ENCODE measurements at regions of chr7 and their contacts with region 1.

Region 1: GRCh38 chr7:119935418-119936025 is 337.5 kb upstream of the KCND2 start:
- DNase-seq: no peak
- H3K4me3 ChIP-seq: no peak overlapping the region
- H3K27ac ChIP-seq: no peak overlapping the region
- H3K4me1 ChIP-seq: no peaks in the 10 kb centered on the region
- H3K27me3 ChIP-seq: no peaks in the 10 kb centered on the region
- CTCF ChIP-seq: peak; percentile 32 to 46

Region 2: GRCh38 chr7:120138497-120138896 is 203.0 kb after region 1 on chr7:
- intact Hi-C with region 1: no loop called
- DNase-seq: no peak
- H3K4me3 ChIP-seq: no peak overlapping the region
- H3K27ac ChIP-seq: no peak overlapping the region
- H3K4me1 ChIP-seq: no peaks in the 10 kb centered on the region
- H3K27me3 ChIP-seq: no peaks in the 10 kb centered on the region
- CTCF ChIP-seq: no peak

Region 3: GRCh38 chr7:120272261-120272660 is 336.7 kb after region 1 on chr7:
- intact Hi-C with region 1: loop called (anchors 2 kb)
- DNase-seq: no peak
- H3K4me3 ChIP-seq: peak overlapping the region; percentile 50 to 52
- H3K27ac ChIP-seq: peak overlapping the region in 1 of 2 donors; percentile 1
- H3K4me1 ChIP-seq: peaks cover 0 to 10% (median 6%) of the 10 kb centered on the region in 4 donors
- H3K27me3 ChIP-seq: peaks cover 0 to 3% of the 10 kb centered on the region in 2 donors
- CTCF ChIP-seq: peak; percentile 58 to 63

Measured in tibial artery (tissue), 4 donors.